ENCODE measurements at regions of chrX and their contacts with region 1.

Region 1: DNA sequence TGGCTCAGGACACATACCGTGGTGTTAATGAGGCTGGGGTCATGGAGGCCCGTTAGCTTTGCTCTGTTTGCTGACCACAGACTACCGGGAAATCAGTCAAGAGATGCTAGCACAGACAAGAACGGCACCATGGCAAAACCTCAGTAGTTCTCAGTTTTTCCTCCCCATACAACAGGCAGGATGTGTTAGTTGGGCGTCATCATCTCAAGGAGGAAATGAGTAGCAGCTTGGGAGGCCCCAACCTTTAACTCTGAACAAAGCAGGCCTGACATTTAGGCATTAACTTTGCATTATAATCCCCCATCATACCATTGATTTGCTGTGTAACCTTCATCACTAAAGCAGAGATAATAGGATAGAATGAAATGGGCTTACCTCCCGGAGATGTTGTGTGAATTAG is 714.2 kb downstream of the RPA4 start:
- DNase-seq: peak; percentile 34
- H3K4me3 ChIP-seq: no peak overlapping the region
- H3K27ac ChIP-seq: peak overlapping the region; percentile 85
- H3K4me1 ChIP-seq: peaks cover 20% of the 10 kb centered on the region
- H3K27me3 ChIP-seq: no peaks in the 10 kb centered on the region
- CTCF ChIP-seq: no peak
- POLR2A ChIP-seq: no peak

Region 2: GRCh38 chrX:97616883-97617530 is 19.1 kb after region 1 on chrX:
- CTCF ChIA-PET with region 1: interaction called, 3 read pairs
- POLR2A ChIA-PET with region 1: no interaction called
- dilution Hi-C with region 1: no loop called
- intact Hi-C with region 1: loop called (anchors 2 kb)
- DNase-seq: peak; percentile 77
- H3K4me3 ChIP-seq: peak overlapping the region in 2 of 3 experiments; percentile 8 to 37
- H3K27ac ChIP-seq: peak overlapping the region; percentile 63
- H3K4me1 ChIP-seq: peaks cover 15% of the 10 kb centered on the region
- H3K27me3 ChIP-seq: no peaks in the 10 kb centered on the region
- CTCF ChIP-seq: no peak
- POLR2A ChIP-seq: no peak

Region 3: GRCh38 chrX:97629597-97629985 is 31.6 kb after region 1 on chrX:
- CTCF ChIA-PET with region 1: no interaction called
- POLR2A ChIA-PET with region 1: no interaction called
- dilution Hi-C with region 1: no loop called
- intact Hi-C with region 1: no loop called
- DNase-seq: no peak
- H3K4me3 ChIP-seq: no peak overlapping the region
- H3K27ac ChIP-seq: no peak overlapping the region
- H3K4me1 ChIP-seq: no peaks in the 10 kb centered on the region
- H3K27me3 ChIP-seq: no peaks in the 10 kb centered on the region
- CTCF ChIP-seq: no peak
- POLR2A ChIP-seq: no peak

Region 4: DNA sequence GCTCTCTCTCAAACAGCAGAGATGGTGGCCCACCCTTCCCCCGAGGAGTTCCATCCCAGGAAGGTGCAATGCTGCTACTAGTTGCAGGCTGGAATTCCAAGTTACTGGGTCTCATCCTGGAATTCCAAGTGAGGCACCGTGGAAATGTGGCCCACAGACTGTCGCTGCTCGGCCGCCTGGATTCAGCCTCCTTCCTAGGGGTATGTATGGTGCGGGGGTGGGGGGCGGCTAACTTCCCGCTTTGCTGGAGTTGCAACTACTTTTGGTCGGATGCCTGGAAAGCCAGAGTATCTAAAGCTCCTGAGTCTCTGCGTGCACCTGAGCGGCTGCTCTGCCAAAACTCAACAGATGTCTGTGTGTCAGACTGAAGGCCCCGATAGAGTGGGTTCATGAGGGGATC is 431.9 kb after region 1 on chrX:
- CTCF ChIA-PET with region 1: no interaction called
- POLR2A ChIA-PET with region 1: no interaction called
- dilution Hi-C with region 1: no loop called
- intact Hi-C with region 1: no loop called
- DNase-seq: no peak
- H3K4me3 ChIP-seq: no peak overlapping the region
- H3K27ac ChIP-seq: no peak overlapping the region
- H3K4me1 ChIP-seq: no peaks in the 10 kb centered on the region
- H3K27me3 ChIP-seq: no peaks in the 10 kb centered on the region
- CTCF ChIP-seq: no peak
- POLR2A ChIP-seq: no peak